ENCODE measurements at regions of chr11 and their contacts with region 1.

Region 1: GRCh38 chr11:40819230-40819629 is 640.2 kb downstream of the LRRC4C start:
- DNase-seq: no peak
- H3K4me3 ChIP-seq: no peak overlapping the region
- H3K27ac ChIP-seq: no peak overlapping the region
- H3K4me1 ChIP-seq: no peaks in the 10 kb centered on the region
- H3K27me3 ChIP-seq: no peaks in the 10 kb centered on the region
- CTCF ChIP-seq: no peak
- POLR2A ChIP-seq: no peak

Region 2: GRCh38 chr11:40397141-40397540 is 422.1 kb before region 1 on chr11:
- CTCF ChIA-PET with region 1: no interaction called
- POLR2A ChIA-PET with region 1: no interaction called
- dilution Hi-C with region 1: no loop called
- intact Hi-C with region 1: no loop called
- DNase-seq: no peak
- H3K4me3 ChIP-seq: no peak overlapping the region
- H3K27ac ChIP-seq: no peak overlapping the region
- H3K4me1 ChIP-seq: no peaks in the 10 kb centered on the region
- H3K27me3 ChIP-seq: no peaks in the 10 kb centered on the region
- CTCF ChIP-seq: no peak
- POLR2A ChIP-seq: no peak

Region 3: DNA sequence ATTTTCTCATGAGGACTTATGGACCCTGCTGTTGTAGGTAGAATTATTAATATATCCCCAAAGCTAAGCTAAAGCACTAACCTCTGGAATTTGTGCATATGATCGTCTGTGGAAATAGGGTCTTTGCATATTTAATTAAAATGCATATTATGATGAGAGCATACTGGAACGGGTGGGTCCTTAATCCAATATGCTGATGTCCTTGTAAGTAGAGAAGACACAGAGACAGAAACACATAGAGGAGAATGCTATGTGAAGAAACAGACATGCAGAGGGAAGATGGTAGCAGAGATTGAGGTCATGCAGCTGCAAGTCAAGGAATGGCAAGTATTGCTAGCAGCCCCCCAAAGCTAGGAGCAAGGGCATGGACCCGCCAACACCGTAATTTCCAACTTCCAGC is 201.0 kb after region 1 on chr11:
- CTCF ChIA-PET with region 1: no interaction called
- POLR2A ChIA-PET with region 1: no interaction called
- dilution Hi-C with region 1: no loop called
- intact Hi-C with region 1: loop called (anchors 5 kb)
- DNase-seq: no peak
- H3K4me3 ChIP-seq: no peak overlapping the region
- H3K27ac ChIP-seq: no peak overlapping the region
- H3K4me1 ChIP-seq: no peaks in the 10 kb centered on the region
- H3K27me3 ChIP-seq: no peaks in the 10 kb centered on the region
- CTCF ChIP-seq: no peak
- POLR2A ChIP-seq: no peak